ENCODE measurements at regions of chr18 and their contacts with region 1.

Region 1: GRCh38 chr18:11040823-11041656 is 108.3 kb downstream of the PIEZO2 start:
- DNase-seq: peak; percentile 30
- H3K4me3 ChIP-seq: no peak overlapping the region
- H3K27ac ChIP-seq: no peak overlapping the region
- H3K27me3 ChIP-seq: peaks cover 2% of the 10 kb centered on the region
- CTCF ChIP-seq: peak; percentile 83

Region 2: GRCh38 chr18:10860928-10861327 is 180.1 kb before region 1 on chr18:
- CTCF ChIA-PET with region 1: interaction called, 22 read pairs
- POLR2A ChIA-PET with region 1: no interaction called
- DNase-seq: peak; percentile 49
- H3K4me3 ChIP-seq: no peak overlapping the region
- H3K27ac ChIP-seq: no peak overlapping the region
- H3K27me3 ChIP-seq: peaks cover 2% of the 10 kb centered on the region
- CTCF ChIP-seq: no peak

Region 3: DNA sequence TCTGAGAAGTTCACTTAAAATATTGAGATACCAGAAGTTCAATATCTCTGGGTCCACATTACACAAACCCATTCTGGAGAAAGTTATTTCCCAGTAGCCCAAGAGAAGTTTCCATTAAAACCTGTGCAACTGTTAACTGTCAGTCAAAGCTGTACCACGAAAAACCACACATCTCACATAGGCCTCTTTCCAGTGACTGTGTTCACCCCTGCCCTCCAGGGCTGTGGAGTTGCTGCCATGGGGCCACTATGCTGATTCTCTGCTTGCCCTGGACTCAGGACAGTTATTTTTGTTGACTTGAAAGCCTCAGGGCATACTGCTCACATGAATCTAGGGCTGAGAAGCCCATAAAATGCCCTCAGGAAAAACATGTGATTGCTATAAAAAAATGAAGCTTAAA is 45.5 kb before region 1 on chr18:
- CTCF ChIA-PET with region 1: no interaction called
- POLR2A ChIA-PET with region 1: no interaction called
- DNase-seq: no peak
- H3K4me3 ChIP-seq: no peak overlapping the region
- H3K27ac ChIP-seq: no peak overlapping the region
- H3K27me3 ChIP-seq: no peaks in the 10 kb centered on the region
- CTCF ChIP-seq: no peak

Region 4: DNA sequence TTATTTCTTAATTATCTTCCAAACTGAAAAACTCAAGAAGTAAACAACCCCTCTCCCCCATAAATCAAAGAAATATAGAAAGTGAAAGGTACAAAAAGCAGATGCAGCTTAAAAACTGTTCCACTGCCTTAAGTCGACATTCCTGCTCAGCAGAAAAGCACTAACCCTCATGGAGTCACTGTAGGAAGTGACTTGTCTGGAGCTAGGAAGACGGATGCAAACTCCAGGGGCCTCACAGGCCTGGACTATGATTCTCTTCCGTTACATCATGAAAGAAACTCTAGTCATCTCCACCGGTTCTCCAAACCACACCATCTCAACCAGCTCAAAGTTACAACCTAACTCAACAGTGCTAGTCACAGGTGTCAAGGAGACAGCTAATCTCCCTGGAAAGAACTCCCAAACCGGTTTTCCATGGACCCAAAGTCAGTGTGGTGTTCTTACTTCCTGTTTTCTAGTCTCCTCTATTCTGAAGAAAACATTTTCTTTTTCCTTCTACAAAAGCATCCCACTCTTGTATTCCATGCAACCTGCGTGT is 20.1 kb before region 1 on chr18:
- CTCF ChIA-PET with region 1: interaction called, 20 read pairs
- POLR2A ChIA-PET with region 1: no interaction called
- DNase-seq: no peak
- H3K4me3 ChIP-seq: no peak overlapping the region
- H3K27ac ChIP-seq: no peak overlapping the region
- H3K27me3 ChIP-seq: peaks cover 4% of the 10 kb centered on the region
- CTCF ChIP-seq: no peak

Region 5: DNA sequence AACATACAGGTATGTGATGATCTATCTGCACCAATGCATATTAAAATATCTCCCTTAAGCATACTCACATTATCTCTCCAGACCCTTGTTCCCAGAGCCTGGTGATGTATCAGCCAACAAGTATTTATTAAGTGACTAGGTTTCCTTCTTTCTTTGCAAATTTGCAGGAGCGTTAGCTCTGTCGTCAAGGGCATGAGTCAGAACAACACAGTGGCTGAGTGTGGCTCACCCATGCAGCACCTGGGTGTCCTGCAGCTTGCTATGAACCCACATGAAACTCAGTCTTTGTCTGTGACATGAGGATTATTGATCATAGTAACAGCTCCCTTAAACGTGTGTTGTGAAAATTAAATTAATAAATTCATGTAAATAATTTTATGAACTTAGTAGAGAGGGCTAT is 11.8 kb after region 1 on chr18:
- CTCF ChIA-PET with region 1: interaction called, 26 read pairs
- POLR2A ChIA-PET with region 1: no interaction called
- DNase-seq: no peak
- H3K4me3 ChIP-seq: no peak overlapping the region
- H3K27ac ChIP-seq: no peak overlapping the region
- H3K27me3 ChIP-seq: peaks cover 2% of the 10 kb centered on the region
- CTCF ChIP-seq: no peak

Region 6: GRCh38 chr18:11149441-11150270 is 108.6 kb after region 1 on chr18 and contains the start of gene PIEZO2:
- CTCF ChIA-PET with region 1: interaction called, 35 read pairs
- POLR2A ChIA-PET with region 1: interaction called, 3 read pairs
- DNase-seq: no peak
- H3K4me3 ChIP-seq: peak within 1 kb of the TSS; percentile 46
- H3K27ac ChIP-seq: no peak within 1 kb of the TSS
- H3K27me3 ChIP-seq: peaks cover 57% of the 10 kb centered on the region
- CTCF ChIP-seq: no peak
- polyA plus RNA-seq, gene PIEZO2: 2.7 and 2.8 TPM in 2 replicates